ENCODE measurements at regions of chr7 and their contacts with region 1.

Region 1: DNA sequence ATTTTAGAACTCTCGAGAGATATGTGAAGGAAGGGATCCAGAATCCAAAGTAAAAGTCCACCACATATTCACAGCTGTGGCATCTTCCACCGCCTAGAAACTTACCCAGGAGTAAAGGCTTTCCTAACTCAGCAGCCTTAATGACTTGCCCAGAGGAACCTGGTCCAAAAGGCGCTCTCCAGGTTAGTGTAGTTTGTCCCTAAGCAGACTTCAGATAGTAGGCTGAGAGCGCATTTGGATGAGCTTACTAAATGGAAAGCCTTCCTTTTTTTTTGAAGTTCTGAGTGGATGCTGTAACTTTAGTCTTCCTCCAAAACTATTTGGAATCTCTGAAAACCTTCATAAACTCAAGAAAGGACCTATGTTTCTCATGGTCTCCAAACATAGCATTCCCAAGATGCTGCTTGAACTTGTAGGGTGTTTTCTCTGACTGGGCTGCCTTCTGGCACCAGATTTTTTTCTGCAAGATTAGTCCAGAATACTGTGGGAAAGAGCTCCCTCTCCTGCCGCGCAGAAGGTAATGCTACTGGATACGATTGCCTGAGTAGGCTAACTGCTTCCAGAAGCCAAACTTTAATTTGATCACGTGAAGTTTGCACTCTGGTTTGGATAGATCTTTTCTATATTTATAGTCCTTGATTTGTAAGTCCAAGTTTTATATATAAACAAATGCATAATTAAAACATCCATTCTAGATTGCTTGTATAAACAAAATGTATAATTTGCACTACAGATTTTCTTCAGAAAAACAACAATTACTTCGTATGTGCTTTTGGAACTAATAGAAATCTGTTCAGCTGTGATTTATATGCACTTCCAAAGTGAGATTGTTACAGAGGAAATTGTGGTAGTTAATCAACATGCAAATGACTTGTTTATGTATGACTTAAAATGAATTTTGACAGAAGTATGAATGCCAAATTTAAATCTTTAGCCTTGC is 19.6 kb upstream of the GPR37 start:
- DNase-seq: peak in 2 of 3 donors; percentile 27 to 41
- ATAC-seq: peak; percentile 63 to 68
- H3K4me3 ChIP-seq: no peak overlapping the region
- H3K27ac ChIP-seq: no peak overlapping the region
- H3K4me1 ChIP-seq: no peaks in the 10 kb centered on the region
- H3K27me3 ChIP-seq: no peaks in the 10 kb centered on the region

Region 2: GRCh38 chr7:124162667-124163066 is 622.5 kb before region 1 on chr7:
- intact Hi-C with region 1: loop called in 1 of 4 experiments (anchors 10 kb)
- DNase-seq: no peak
- ATAC-seq: no peak
- H3K4me3 ChIP-seq: no peak overlapping the region
- H3K27ac ChIP-seq: no peak overlapping the region
- H3K4me1 ChIP-seq: no peaks in the 10 kb centered on the region
- H3K27me3 ChIP-seq: no peaks in the 10 kb centered on the region

Region 3: GRCh38 chr7:124171068-124171467 is 614.1 kb before region 1 on chr7:
- intact Hi-C with region 1: loop called in 2 of 4 experiments (anchors 5 to 10 kb)
- DNase-seq: peak in 1 of 3 donors; percentile 40
- ATAC-seq: no peak
- H3K4me3 ChIP-seq: no peak overlapping the region
- H3K27ac ChIP-seq: no peak overlapping the region
- H3K4me1 ChIP-seq: no peaks in the 10 kb centered on the region
- H3K27me3 ChIP-seq: no peaks in the 10 kb centered on the region